ENCODE measurements at regions of chr17 and their contacts with region 1.

Region 1: GRCh38 chr17:63275318-63275970 is 170.7 kb downstream of the CYB561 start:
- DNase-seq: peak; percentile 99
- ATAC-seq: peak; percentile 82
- H3K4me3 ChIP-seq: peak overlapping the region; percentile 24; the same call in 1 of the 2 replicates
- H3K27ac ChIP-seq: peak overlapping the region; percentile 91
- H3K4me1 ChIP-seq: peaks cover 67% of the 10 kb centered on the region
- H3K27me3 ChIP-seq: no peaks in the 10 kb centered on the region
- CTCF ChIP-seq: no peak

Region 2: DNA sequence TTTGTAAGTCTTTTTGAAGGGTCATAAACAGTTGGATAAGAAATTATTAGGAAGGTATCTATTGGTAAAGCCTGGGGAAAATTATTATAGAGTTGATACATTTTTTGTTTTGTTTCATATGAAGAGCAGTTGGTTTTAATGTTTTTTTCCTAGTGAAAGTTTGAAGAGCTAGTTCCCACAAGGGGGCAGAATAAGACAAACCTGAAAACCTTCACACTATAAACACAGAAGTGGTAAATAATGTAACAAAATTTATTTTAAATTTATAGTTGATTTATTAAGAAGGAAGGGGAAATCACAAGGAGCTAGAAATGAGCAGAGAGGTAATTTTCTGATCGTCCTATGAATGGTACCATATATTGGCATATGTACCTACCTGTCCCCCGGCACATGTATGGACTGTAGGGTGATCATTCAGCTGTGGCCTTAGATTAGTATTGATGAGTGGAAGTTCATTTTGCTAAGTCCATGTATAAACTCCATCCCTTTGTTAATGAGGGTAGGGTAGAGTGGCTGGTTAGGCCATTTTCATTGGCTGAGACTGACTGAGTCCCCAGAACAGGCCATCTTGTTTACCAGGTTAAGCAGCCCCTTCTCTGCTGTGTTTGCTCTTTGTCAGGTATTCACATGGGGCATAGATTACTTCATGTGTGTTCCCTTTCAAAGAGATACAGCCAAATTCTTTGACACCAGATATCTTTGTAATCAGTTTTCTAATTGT is 193.0 kb before region 1 on chr17:
- CTCF ChIA-PET with region 1: no interaction called
- POLR2A ChIA-PET with region 1: no interaction called
- intact Hi-C with region 1: loop called (anchors 1 kb)
- DNase-seq: peak; percentile 58
- ATAC-seq: peak; percentile 28; the same call in 1 of the 2 replicates
- H3K4me3 ChIP-seq: no peak overlapping the region
- H3K27ac ChIP-seq: no peak overlapping the region
- H3K4me1 ChIP-seq: peaks cover 4% of the 10 kb centered on the region; the same call in 1 of the 2 replicates
- H3K27me3 ChIP-seq: no peaks in the 10 kb centered on the region
- CTCF ChIP-seq: peak; percentile 77

Region 3: GRCh38 chr17:63293323-63294075 is 18.1 kb after region 1 on chr17:
- CTCF ChIA-PET with region 1: no interaction called
- POLR2A ChIA-PET with region 1: no interaction called
- intact Hi-C with region 1: loop called (anchors 1 kb)
- DNase-seq: peak; percentile 83
- ATAC-seq: peak; percentile 84
- H3K4me3 ChIP-seq: no peak overlapping the region
- H3K27ac ChIP-seq: peak overlapping the region; percentile 63
- H3K4me1 ChIP-seq: peaks cover 35% of the 10 kb centered on the region
- H3K27me3 ChIP-seq: no peaks in the 10 kb centered on the region
- CTCF ChIP-seq: no peak

Region 4: DNA sequence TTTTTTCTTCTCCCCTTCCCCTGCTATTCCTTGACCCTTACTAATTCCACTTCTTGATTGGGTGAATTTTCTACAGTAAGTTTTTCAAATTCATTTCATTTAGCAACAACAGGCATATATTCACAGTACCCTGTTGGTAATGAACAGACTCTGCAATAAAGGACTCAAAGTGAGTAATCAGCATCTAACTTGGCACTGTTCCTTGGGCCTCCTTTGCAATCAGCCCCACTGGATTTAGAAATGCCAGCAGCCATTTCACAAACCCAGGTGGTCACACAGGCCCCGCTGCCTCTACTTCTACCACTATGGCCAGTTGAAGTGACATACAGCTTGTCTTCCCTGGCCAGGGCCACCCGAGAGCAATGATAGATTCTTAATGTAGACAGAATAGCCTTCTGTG is 56.8 kb after region 1 on chr17:
- CTCF ChIA-PET with region 1: no interaction called
- POLR2A ChIA-PET with region 1: no interaction called
- intact Hi-C with region 1: loop called (anchors 1 kb)
- DNase-seq: peak; percentile 8
- ATAC-seq: no peak
- H3K4me3 ChIP-seq: no peak overlapping the region
- H3K27ac ChIP-seq: no peak overlapping the region
- H3K4me1 ChIP-seq: peaks cover 19% of the 10 kb centered on the region
- H3K27me3 ChIP-seq: no peaks in the 10 kb centered on the region
- CTCF ChIP-seq: no peak

Region 5: DNA sequence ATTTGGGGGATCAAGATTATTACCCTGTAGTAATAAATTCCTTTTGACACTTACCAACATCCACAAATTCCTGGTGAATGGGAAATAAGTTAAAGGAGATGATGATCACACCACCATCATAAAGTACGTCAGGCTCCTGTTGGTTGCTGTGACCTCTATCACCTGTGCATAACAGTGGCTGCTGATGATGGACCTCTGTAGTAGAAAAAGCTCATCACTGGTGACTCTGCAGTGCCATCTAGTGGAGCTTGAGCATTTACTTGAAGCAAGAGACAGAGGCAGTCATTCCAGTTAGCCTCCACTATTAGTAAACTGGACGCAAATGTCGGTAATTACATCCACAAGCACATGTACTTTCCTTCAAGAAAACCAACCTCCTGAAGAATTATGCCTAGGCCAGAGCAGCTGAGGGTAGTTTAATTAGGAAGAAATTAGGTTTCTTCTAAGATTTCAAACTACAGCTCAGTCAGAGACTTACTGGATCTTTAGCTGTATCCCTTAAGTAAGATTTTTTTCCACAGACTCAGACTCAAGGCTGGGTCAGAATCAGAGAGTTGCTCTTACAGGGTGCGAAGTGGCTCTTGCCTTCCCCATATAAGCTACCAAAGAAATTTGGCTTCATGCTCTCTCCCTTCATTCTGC is 131.4 kb after region 1 on chr17:
- CTCF ChIA-PET with region 1: interaction called, 5 read pairs
- POLR2A ChIA-PET with region 1: no interaction called
- intact Hi-C with region 1: loop called (anchors 2 kb)
- DNase-seq: peak; percentile 97
- ATAC-seq: peak; percentile 92
- H3K4me3 ChIP-seq: no peak overlapping the region
- H3K27ac ChIP-seq: no peak overlapping the region
- H3K4me1 ChIP-seq: peaks cover 11% of the 10 kb centered on the region
- H3K27me3 ChIP-seq: no peaks in the 10 kb centered on the region
- CTCF ChIP-seq: peak; percentile 98